Left ventricle myocardium superior (tissue), 1 donor: ENCODE measurements at regions of chr14 and their contacts with region 1.

Region 1: GRCh38 chr14:75794615-75795038 is 133.6 kb downstream of the TTLL5 start:
- DNase-seq: no peak
- ATAC-seq: peak; percentile 96

Region 2: DNA sequence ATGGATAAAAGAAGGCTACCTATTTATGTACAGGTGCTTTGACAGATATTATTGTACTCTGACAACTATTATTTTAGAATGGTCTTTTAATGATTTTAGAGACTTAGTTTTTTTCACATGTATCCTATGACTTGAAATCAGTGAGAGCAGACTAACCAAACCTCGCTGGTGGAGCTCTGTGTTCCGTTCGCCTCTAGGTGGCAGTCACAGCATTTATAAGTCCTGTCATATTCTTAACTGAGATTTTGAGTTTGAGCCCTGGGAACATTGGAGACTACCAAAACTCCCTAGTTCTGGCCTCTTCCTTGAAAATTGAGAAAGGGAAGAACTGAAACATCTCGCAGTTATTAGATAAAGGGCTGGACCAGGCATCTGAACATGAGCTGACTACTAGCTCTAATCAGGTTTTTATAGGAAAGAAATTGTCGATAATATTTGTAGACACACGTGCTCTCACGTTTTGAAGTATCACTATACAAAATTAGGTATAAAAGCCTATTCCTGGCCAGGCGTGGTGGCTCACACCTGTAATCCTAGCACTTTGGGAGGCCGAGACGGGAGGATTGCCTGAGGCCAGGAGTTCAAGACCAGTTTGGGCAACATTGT is 85.3 kb before region 1 on chr14:
- intact Hi-C with region 1: loop called (anchors 10 kb)
- DNase-seq: peak; percentile 73
- ATAC-seq: peak; percentile 69

Region 3: DNA sequence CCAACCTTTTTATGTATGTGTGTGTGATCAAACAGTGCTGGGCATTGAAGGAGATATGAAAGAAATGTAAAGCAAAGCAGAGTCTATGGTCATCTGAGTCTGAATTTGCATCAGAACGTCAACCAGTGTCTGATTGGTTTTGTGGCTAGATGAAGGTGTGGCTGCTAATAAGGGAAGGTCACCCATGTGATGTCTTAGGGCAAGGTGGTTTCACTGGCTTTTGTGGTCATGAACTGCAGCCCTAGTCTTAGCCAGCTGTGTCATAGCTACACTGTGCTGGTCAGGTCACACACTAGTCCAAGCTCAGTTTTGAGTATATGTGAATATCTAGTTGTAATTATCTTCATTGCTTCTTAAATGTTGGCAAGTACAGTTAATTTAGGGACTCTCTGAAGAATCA is 81.3 kb after region 1 on chr14:
- intact Hi-C with region 1: loop called (anchors 10 kb)
- DNase-seq: no peak
- ATAC-seq: no peak

Region 4: GRCh38 chr14:76767681-76768656 is 973.3 kb after region 1 on chr14:
- intact Hi-C with region 1: no loop called
- DNase-seq: peak; percentile 76
- ATAC-seq: peak; percentile 87